ENCODE measurements at regions of chr1 and their contacts with region 1.

Region 1: GRCh38 chr1:20194757-20195461 is 8.6 kb upstream of the PLA2G2C start:
- DNase-seq: no peak
- H3K4me3 ChIP-seq: no peak overlapping the region
- CTCF ChIP-seq: peak; percentile 85

Region 2: GRCh38 chr1:19892628-19893168 is 302.2 kb before region 1 on chr1:
- CTCF ChIA-PET with region 1: no interaction called
- POLR2A ChIA-PET with region 1: no interaction called
- DNase-seq: no peak
- H3K4me3 ChIP-seq: no peak overlapping the region
- CTCF ChIP-seq: no peak

Region 3: GRCh38 chr1:19909392-19909791 is 285.5 kb before region 1 on chr1:
- CTCF ChIA-PET with region 1: interaction called, 20 read pairs
- POLR2A ChIA-PET with region 1: no interaction called
- DNase-seq: no peak
- H3K4me3 ChIP-seq: no peak overlapping the region
- CTCF ChIP-seq: no peak

Region 4: DNA sequence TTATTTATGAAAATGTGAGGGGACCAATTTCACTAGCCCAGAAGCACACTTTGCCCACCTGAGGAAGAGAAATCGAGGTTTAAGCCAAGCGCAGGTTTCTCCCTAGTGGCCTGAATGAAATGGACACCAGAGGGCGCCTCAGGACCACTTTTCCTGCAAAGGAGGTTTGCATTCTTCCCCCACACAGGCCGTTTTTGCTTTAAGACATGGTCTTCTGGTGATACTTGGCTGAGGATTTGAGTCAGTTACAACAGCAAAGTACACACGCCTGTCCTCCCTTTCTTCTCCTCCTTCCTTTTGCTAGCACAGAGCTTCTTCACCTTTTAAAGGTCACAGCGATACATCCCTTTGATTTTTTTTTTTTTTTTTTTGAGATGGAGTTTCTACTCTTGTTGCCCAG is 276.9 kb before region 1 on chr1:
- CTCF ChIA-PET with region 1: interaction called, 101 read pairs
- POLR2A ChIA-PET with region 1: no interaction called
- DNase-seq: peak; percentile 49
- H3K4me3 ChIP-seq: no peak overlapping the region
- CTCF ChIP-seq: peak; percentile 86

Region 5: DNA sequence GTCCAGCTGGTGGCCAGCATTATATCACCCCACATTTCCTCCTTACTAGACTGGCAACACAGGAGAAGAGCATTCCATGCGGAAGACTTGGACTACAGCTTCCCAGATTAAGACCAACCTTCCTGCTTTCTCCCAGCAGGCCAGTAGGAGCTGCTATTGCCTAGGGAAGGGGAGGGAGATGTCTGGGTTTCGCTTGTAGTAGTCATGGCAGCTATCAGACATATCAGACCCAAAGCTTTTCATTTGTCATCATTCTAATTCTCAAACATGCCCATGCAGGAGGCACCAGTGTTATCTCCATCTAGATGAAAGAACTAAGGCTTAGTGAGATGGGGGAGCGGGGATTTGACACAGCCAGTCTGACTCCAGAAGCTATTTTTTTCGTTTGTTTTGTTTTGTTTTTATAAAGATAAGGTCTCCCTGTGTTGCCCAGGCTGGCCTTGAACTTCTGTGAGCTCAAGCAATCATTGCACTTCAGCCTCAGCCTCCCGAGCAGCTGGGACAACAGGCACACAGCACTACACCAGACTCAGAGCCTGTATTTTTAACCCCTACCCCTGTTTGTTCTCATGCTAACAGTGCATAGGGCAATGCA is 220.0 kb before region 1 on chr1:
- CTCF ChIA-PET with region 1: interaction called, 72 read pairs
- POLR2A ChIA-PET with region 1: no interaction called
- DNase-seq: peak; percentile 28
- H3K4me3 ChIP-seq: no peak overlapping the region
- CTCF ChIP-seq: peak; percentile 91

Region 6: DNA sequence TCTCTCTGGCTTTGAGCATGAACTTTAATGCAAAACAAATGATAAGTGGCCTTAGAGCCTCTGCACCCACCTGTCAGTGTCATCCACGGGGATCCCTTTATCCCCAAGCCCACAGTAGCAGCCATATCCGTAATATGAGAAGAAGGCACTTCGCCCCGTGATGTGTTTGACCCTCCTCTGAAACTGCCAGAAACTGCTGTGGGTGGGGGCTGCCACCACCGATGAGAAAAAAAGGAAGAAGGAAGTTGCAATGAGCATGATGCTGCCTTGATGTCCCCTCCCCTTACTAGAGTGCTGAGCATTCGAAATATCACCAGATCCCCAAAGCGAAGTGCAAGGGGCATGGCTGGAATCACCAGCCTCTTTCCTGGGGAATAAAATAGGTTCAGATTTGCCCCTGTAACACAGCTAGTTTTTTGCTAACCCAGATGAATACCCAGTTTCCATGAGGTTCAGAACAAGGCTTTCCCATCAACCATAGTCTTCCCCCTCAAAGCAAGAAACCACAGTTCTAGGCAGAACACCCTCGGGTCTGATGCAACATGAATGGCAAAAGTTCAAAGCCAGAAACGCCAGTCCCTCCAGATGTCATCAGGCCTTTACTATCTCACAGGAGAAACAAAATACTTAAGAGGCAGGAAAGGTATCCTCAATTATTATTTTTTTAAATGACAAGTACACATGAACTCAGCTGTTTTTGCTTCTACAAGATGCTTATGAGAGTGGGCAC is 19.8 kb before region 1 on chr1:
- CTCF ChIA-PET with region 1: interaction called, 53 read pairs
- POLR2A ChIA-PET with region 1: no interaction called
- DNase-seq: no peak
- H3K4me3 ChIP-seq: no peak overlapping the region
- CTCF ChIP-seq: no peak

Region 7: DNA sequence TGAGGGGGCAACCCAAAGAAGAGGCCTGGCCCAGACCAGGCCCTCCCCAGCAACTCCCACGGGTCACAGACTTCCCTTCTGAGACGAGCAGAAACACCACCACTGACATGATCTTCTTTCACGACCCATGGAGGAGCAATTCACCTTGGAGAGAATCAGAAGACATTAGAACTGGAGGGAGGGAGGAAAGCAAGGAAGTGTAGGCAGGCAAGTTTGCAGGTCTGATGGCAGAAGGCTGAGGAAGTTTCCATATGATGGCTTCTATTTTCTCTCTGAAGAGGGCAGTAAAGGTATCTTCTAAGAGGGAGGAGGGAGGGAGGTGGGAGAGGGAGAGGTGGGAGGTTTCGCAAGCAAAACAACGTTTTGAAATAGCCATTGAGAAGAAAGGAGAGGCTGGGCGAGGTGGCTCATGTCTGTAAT is 10.4 kb before region 1 on chr1:
- CTCF ChIA-PET with region 1: interaction called, 53 read pairs
- POLR2A ChIA-PET with region 1: no interaction called
- DNase-seq: no peak
- H3K4me3 ChIP-seq: no peak overlapping the region
- CTCF ChIP-seq: no peak

Region 8: DNA sequence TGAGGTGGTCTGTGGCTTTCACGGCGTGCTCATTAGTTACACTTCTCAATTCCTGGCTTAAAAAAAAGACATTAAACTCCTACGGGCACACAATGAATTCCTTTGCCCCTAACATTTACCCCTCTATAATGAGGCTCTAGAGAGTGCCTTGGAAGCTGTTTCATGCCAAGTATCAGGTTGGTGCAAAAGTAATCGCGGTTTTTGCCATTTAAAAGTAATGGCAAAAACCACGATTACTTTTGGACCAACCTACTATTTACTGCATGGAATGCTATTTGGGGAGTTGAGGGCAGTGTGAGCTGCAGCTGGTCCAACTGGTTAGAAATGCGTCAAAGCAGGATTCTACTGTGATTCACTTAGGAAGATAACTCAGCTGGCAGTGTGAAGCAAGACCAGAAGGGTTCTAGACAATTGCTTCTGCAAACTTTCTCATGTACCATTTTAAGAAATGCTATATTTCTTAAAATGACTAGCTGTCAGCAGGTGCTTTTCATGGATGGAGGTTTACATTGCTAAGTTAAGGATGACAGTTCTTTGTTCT is 12.6 kb after region 1 on chr1:
- CTCF ChIA-PET with region 1: interaction called, 38 read pairs
- POLR2A ChIA-PET with region 1: no interaction called
- DNase-seq: no peak
- H3K4me3 ChIP-seq: no peak overlapping the region
- CTCF ChIP-seq: no peak